ENCODE measurements at regions of chr10 and their contacts with region 1.

Region 1: GRCh38 chr10:112140110-112140970 is 43.2 kb downstream of the GPAM start:
- DNase-seq: peak; percentile 64
- H3K4me3 ChIP-seq: no peak overlapping the region
- H3K27ac ChIP-seq: no peak overlapping the region
- H3K4me1 ChIP-seq: no peaks in the 10 kb centered on the region
- H3K27me3 ChIP-seq: no peaks in the 10 kb centered on the region
- CTCF ChIP-seq: peak; percentile 90 to 91

Region 2: GRCh38 chr10:110304780-110305421 is 1835.4 kb before region 1 on chr10 and contains the start of gene SMNDC1:
- CTCF ChIA-PET with region 1: no interaction called
- dilution Hi-C with region 1: no loop called
- in situ Hi-C with region 1: no loop called
- intact Hi-C with region 1: loop called (anchors 2 kb)
- DNase-seq: peak; percentile 96
- H3K4me3 ChIP-seq: peak within 1 kb of the TSS; percentile 69 to 97 (median 95)
- H3K27ac ChIP-seq: peak within 1 kb of the TSS; percentile 86
- H3K4me1 ChIP-seq: peaks cover 19% of the 10 kb centered on the region
- H3K27me3 ChIP-seq: no peaks in the 10 kb centered on the region
- CTCF ChIP-seq: no peak
- total RNA-seq, gene SMNDC1: 6.5 to 42.8 TPM

Region 3: GRCh38 chr10:110610308-110610774 is 1530.0 kb before region 1 on chr10:
- CTCF ChIA-PET with region 1: interaction called, 3 read pairs
- dilution Hi-C with region 1: no loop called
- in situ Hi-C with region 1: loop called in 1 of 2 experiments (anchors 25 kb)
- intact Hi-C with region 1: loop called (anchors 2 kb)
- DNase-seq: peak; percentile 46
- H3K4me3 ChIP-seq: no peak overlapping the region
- H3K27ac ChIP-seq: no peak overlapping the region
- H3K4me1 ChIP-seq: peaks cover 9% of the 10 kb centered on the region
- H3K27me3 ChIP-seq: no peaks in the 10 kb centered on the region
- CTCF ChIP-seq: peak; percentile 89 to 90

Region 4: GRCh38 chr10:112115799-112116385 is 24.4 kb before region 1 on chr10:
- CTCF ChIA-PET with region 1: no interaction called
- dilution Hi-C with region 1: no loop called
- in situ Hi-C with region 1: no loop called
- intact Hi-C with region 1: loop called (anchors 1 kb)
- DNase-seq: peak; percentile 7
- H3K4me3 ChIP-seq: no peak overlapping the region
- H3K27ac ChIP-seq: no peak overlapping the region
- H3K4me1 ChIP-seq: no peaks in the 10 kb centered on the region
- H3K27me3 ChIP-seq: no peaks in the 10 kb centered on the region
- CTCF ChIP-seq: peak; percentile 88

Region 5: DNA sequence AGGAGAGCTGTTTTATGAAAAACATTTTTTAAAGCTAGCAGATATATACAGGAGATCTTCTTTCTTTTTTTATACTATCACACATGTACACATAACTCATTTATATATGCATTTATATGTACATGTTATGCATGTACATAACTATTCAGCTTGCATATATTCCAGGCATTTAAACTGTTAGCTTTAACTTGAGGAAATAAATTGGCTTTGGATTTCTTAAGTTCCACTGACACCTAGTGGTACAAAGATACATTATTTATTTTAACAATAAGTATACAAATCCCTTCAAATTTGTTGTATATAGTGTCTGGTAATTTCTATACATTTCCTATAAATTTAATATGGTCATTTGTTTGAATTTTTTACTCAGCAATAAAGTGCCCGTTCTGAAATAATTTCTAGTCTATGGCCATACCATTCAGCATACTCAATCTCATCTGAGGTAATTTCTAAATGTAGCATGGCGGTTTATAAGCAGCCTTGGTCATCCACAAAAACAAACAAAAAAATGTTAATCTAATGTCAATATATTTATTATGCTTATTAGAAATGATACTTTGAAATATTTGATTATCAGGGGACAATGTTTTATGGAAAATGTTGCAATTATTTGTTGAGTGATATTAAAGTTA is 294.8 kb after region 1 on chr10:
- CTCF ChIA-PET with region 1: no interaction called
- dilution Hi-C with region 1: no loop called
- in situ Hi-C with region 1: no loop called
- intact Hi-C with region 1: loop called (anchors 10 kb)
- DNase-seq: peak; percentile 3
- H3K4me3 ChIP-seq: no peak overlapping the region
- H3K27ac ChIP-seq: no peak overlapping the region
- H3K4me1 ChIP-seq: no peaks in the 10 kb centered on the region
- H3K27me3 ChIP-seq: no peaks in the 10 kb centered on the region
- CTCF ChIP-seq: peak; percentile 2 to 39

Measured in mammary epithelial cell (primary cell).